ENCODE measurements at regions of chr19 and their contacts with region 1.

Region 1: GRCh38 chr19:19053508-19054314 is 10.1 kb upstream of the SLC25A42 start:
- DNase-seq: peak; percentile 72 to 83 (median 76)
- ATAC-seq: peak; percentile 86
- H3K4me3 ChIP-seq: no peak overlapping the region
- H3K27ac ChIP-seq: no peak overlapping the region
- H3K4me1 ChIP-seq: peaks cover 4 to 51% of the 10 kb centered on the region in 2 experiments; a peak in 4 of 5 replicates
- H3K27me3 ChIP-seq: no peaks in the 10 kb centered on the region
- CTCF ChIP-seq: peak; percentile 84 to 93 (median 88)
- EP300 ChIP-seq: no peak
- POLR2A ChIP-seq: no peak
- RAD21 ChIP-seq: peak; percentile 88 to 94

Region 2: GRCh38 chr19:19081642-19082151 is 28.0 kb after region 1 on chr19:
- CTCF ChIA-PET with region 1: no interaction called
- POLR2A ChIA-PET with region 1: no interaction called
- in situ Hi-C with region 1: no loop called
- intact Hi-C with region 1: no loop called
- DNase-seq: peak in 1 of 4 experiments; percentile 41
- ATAC-seq: peak; percentile 27; the same call in 2 of the 3 replicates
- H3K4me3 ChIP-seq: no peak overlapping the region
- H3K27ac ChIP-seq: peak overlapping the region; percentile 10; the same call in 1 of the 3 replicates
- H3K4me1 ChIP-seq: peaks cover 7 to 16% of the 10 kb centered on the region in 2 experiments; a peak in 3 of 5 replicates
- H3K27me3 ChIP-seq: no peaks in the 10 kb centered on the region
- CTCF ChIP-seq: no peak
- EP300 ChIP-seq: no peak
- POLR2A ChIP-seq: no peak
- RAD21 ChIP-seq: no peak

Region 3: DNA sequence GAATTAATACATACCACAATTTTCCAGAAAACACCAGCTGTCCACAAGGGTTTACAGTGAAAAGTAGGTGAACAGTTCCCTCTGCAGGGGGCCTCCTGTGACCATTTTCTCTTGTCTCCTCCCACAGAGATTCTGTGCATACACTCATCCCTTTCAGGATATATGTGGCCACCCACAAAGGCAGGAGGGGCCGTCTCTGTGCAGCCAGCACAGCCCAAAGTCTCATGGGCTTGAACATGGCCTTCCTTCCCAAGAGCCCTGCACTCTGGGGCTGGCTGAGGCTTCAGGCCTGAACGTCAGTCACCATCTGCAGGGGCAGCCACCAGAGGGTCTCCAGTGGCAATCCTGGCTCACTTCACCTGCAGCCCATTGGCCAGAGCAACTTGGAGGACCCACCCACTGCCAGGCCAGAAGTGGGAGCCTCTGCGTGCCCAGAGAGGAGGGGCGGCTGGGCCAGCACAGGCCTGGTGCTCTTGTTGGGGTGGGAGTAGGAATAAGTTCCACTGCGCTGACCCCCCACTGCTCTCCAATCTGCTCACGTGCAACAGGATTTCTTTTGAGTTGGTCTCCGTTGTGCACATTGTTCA is 59.4 kb after region 1 on chr19:
- CTCF ChIA-PET with region 1: interaction called, 9 read pairs
- POLR2A ChIA-PET with region 1: interaction called, 5 read pairs
- in situ Hi-C with region 1: no loop called
- intact Hi-C with region 1: loop called (anchors 2 kb)
- DNase-seq: peak; percentile 50 to 72 (median 60)
- ATAC-seq: peak; percentile 87
- H3K4me3 ChIP-seq: no peak overlapping the region
- H3K27ac ChIP-seq: no peak overlapping the region
- H3K4me1 ChIP-seq: peaks cover 12 to 31% of the 10 kb centered on the region in 2 experiments; a peak in 4 of 5 replicates
- H3K27me3 ChIP-seq: no peaks in the 10 kb centered on the region
- CTCF ChIP-seq: peak; percentile 54 to 69 (median 68)
- EP300 ChIP-seq: no peak
- POLR2A ChIP-seq: peak; percentile 44
- RAD21 ChIP-seq: peak; percentile 60 to 71

Region 4: DNA sequence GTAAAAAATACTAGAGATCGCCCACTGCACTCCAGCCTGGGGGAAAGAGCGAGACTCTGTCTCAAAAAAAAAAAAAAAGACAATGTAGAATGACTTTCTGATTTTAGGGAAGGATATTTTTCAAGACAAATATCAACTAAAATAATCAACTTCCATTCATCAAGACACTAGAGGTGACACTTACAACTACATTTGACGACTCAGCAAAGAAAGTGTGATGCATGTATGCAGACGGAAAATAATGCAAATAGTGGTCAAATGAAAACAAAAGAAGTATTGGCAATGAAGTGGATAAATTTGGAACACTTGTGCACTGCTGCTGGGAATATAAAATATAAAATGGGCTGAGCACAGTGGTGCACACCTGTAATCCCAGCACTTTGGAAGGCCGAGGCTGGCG is 72.4 kb after region 1 on chr19:
- CTCF ChIA-PET with region 1: no interaction called
- POLR2A ChIA-PET with region 1: no interaction called
- in situ Hi-C with region 1: no loop called
- intact Hi-C with region 1: no loop called
- DNase-seq: no peak
- ATAC-seq: no peak
- H3K4me3 ChIP-seq: no peak overlapping the region
- H3K27ac ChIP-seq: no peak overlapping the region
- H3K4me1 ChIP-seq: peaks cover 3 to 11% of the 10 kb centered on the region in 2 experiments
- H3K27me3 ChIP-seq: no peaks in the 10 kb centered on the region
- CTCF ChIP-seq: no peak
- EP300 ChIP-seq: no peak
- POLR2A ChIP-seq: no peak
- RAD21 ChIP-seq: no peak

Region 5: GRCh38 chr19:19170053-19170872 is 116.6 kb after region 1 on chr19 and contains the start of gene MEF2B:
- CTCF ChIA-PET with region 1: interaction called, 20 read pairs
- POLR2A ChIA-PET with region 1: no interaction called
- in situ Hi-C with region 1: no loop called
- intact Hi-C with region 1: no loop called
- DNase-seq: peak; percentile 94 to 98 (median 98)
- ATAC-seq: peak; percentile 94
- H3K4me3 ChIP-seq: peak within 1 kb of the TSS; percentile 34
- H3K27ac ChIP-seq: peak within 1 kb of the TSS; percentile 40; the same call in 1 of the 3 replicates
- H3K4me1 ChIP-seq: peaks cover 31 to 34% of the 10 kb centered on the region in 2 experiments; a peak in 4 of 5 replicates
- H3K27me3 ChIP-seq: no peaks in the 10 kb centered on the region
- CTCF ChIP-seq: no peak
- EP300 ChIP-seq: no peak
- POLR2A ChIP-seq: 0 out of 2 replicates have a peak, but pooled peaks have one; percentile 19
- RAD21 ChIP-seq: no peak
- polyA plus RNA-seq, gene MEF2B: not detected

Region 6: GRCh38 chr19:19320362-19321142 is 266.8 kb after region 1 on chr19 and contains the starts of genes MAU2 and SUGP1:
- CTCF ChIA-PET with region 1: no interaction called
- POLR2A ChIA-PET with region 1: no interaction called
- in situ Hi-C with region 1: loop called (anchors 10 kb)
- intact Hi-C with region 1: loop called (anchors 10 kb)
- DNase-seq: peak; percentile 90 to 94 (median 92)
- ATAC-seq: peak; percentile 96
- H3K4me3 ChIP-seq: peak within 1 kb of the TSS; percentile 95
- H3K27ac ChIP-seq: peak within 1 kb of the TSS; percentile 100
- H3K4me1 ChIP-seq: peaks cover 6 to 22% of the 10 kb centered on the region in 2 experiments; a peak in 4 of 5 replicates
- H3K27me3 ChIP-seq: no peaks in the 10 kb centered on the region
- CTCF ChIP-seq: peak; percentile 30 to 39 (median 32); a peak in 3 of 6 replicates
- EP300 ChIP-seq: no peak; the same call in 1 of the 2 replicates
- POLR2A ChIP-seq: peak; percentile 84
- RAD21 ChIP-seq: peak in 1 of 2 experiments; percentile 26; a peak in 1 of 4 replicates
- polyA plus RNA-seq, gene MAU2: 1.2 to 1.4 TPM
- polyA plus RNA-seq, gene SUGP1: 1.0 to 1.9 TPM

Measured in K562 (cell line).